CD4-positive, alpha-beta memory T cell (primary cell): ENCODE measurements at regions of chr4 and their contacts with region 1.

Region 1: GRCh38 chr4:145936142-145936996 is 2.3 kb downstream of the ZNF827 start:
- DNase-seq: peak; percentile 62 to 83 (median 66)
- H3K4me3 ChIP-seq: peak overlapping the region; percentile 69 to 73
- H3K4me3 Mint-ChIP-seq: peak overlapping the region; percentile 91 to 99 (median 95)
- H3K27ac ChIP-seq: peak overlapping the region; percentile 39
- H3K27ac Mint-ChIP-seq: peak overlapping the region; percentile 86 to 95 (median 91)
- H3K4me1 ChIP-seq: peaks cover 15% of the 10 kb centered on the region
- H3K4me1 Mint-ChIP-seq: peaks cover 19 to 44% (median 27%) of the 10 kb centered on the region in 4 donors
- H3K27me3 ChIP-seq: no peaks in the 10 kb centered on the region
- H3K27me3 Mint-ChIP-seq: peaks cover 3 to 5% of the 10 kb centered on the region in 2 donors

Region 2: DNA sequence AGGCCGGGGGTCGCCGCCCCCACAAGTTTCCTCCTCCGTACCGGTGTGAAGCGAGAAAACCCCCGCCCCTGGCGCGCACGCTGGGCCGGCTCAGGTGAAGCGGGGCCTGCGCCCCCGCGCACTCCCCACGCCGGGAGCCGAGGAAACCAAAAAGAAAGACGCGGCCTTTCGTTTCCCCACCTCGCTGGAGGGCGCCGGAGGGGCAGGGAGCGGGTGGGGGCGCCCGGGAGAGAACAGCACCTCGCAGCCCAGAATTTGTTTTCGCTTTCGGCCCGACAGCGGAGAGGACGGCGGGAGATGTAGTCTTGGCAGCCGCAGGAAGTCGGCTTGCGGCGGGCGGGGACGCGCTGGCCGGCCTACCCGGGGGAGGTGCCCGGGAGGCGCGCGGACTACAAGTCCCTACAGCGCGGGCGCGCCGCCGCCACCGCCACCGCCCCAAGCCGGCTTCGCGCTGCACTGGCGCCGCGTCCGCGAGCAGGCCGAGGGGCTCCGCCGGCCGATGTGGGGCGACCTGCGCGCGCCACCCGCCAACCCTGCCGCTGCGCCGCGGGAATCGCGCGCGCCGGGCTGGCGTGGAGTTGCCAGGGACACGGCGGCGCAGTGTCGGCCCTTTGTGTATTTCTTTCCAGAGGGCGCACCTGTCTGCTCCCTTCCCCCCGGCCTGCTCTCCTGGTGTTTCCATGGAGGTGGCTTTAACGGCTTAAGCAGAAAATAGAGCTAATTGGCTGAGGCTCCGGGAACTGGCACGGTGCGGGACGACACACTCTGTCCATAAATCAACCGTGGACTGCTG is 755.9 kb before region 1 on chr4 and contains the start of gene OTUD4:
- CTCF ChIA-PET with region 1: no interaction called
- POLR2A ChIA-PET with region 1: no interaction called
- intact Hi-C with region 1: loop called (anchors 5 kb)
- DNase-seq: peak; percentile 95 to 97 (median 96)
- H3K4me3 ChIP-seq: peak within 1 kb of the TSS; percentile 84 to 96
- H3K4me3 Mint-ChIP-seq: peak within 1 kb of the TSS; percentile 89 to 98 (median 95)
- H3K27ac ChIP-seq: peak within 1 kb of the TSS; percentile 94
- H3K27ac Mint-ChIP-seq: peak within 1 kb of the TSS; percentile 96 to 99 (median 98)
- H3K4me1 ChIP-seq: peaks cover 40% of the 10 kb centered on the region
- H3K4me1 Mint-ChIP-seq: peaks cover 15 to 40% (median 28%) of the 10 kb centered on the region in 4 donors
- H3K27me3 ChIP-seq: no peaks in the 10 kb centered on the region
- H3K27me3 Mint-ChIP-seq: no peaks in the 10 kb centered on the region
- total RNA-seq, gene OTUD4: 60.1 to 61.3 TPM

Region 3: GRCh38 chr4:145830699-145831098 is 105.7 kb before region 1 on chr4:
- CTCF ChIA-PET with region 1: no interaction called
- POLR2A ChIA-PET with region 1: no interaction called
- intact Hi-C with region 1: loop called (anchors 5 kb)
- DNase-seq: no peak
- H3K4me3 ChIP-seq: no peak overlapping the region
- H3K4me3 Mint-ChIP-seq: peak overlapping the region in 1 of 8 donors; percentile 15
- H3K27ac ChIP-seq: no peak overlapping the region
- H3K27ac Mint-ChIP-seq: peak overlapping the region in 2 of 7 donors; percentile 29 to 80
- H3K4me1 ChIP-seq: peaks cover 21% of the 10 kb centered on the region
- H3K4me1 Mint-ChIP-seq: peaks cover 18 to 45% (median 32%) of the 10 kb centered on the region in 4 donors
- H3K27me3 ChIP-seq: no peaks in the 10 kb centered on the region
- H3K27me3 Mint-ChIP-seq: no peaks in the 10 kb centered on the region

Region 4: DNA sequence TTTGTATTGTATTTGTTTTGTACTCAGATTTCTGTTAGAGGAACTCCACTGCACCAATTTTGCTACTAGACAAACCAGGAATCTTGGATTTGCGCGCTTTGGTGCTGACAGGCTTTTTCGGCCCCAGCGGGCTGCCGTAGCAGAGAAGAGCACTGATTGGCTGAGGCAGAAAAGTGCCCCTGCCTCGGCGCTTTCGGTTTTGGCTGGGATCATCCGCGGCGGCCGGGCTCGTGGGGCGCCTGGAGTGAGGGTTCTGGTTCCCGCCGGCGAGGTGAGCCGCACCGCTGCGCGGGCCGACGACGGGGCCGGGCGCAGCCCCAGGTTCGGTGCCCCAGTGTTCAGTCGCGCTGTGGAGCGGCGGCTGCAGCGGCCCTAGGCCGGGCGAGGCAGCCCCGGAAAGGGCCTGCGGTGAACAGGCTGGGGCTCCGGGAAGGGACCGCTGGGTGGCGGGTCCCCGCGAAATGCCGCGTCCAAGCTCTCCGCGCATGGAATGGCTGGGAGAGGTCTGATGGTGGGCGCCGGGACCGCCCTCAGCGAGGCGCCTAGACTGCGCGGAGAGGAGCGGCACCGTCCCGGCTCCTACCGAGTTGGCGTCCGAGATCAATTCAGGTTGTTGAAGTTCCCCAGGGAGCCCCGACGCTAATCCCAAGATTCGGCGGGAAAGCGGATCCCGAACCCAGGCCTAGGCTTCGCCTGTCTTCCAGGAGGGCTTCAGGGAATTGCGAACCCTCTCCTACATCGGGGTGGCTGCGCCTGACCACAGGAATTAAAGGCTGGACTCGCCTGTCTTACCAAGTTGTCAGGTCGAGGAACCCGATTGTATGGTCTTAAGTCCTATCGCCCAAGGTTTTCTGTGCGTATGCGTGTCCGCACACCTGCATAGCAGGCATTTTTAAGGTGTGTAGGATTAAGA is 239.4 kb after region 1 on chr4 and contains the start of gene LSM6:
- CTCF ChIA-PET with region 1: no interaction called
- POLR2A ChIA-PET with region 1: no interaction called
- intact Hi-C with region 1: loop called (anchors 2 kb)
- DNase-seq: peak; percentile 83 to 87 (median 84)
- H3K4me3 ChIP-seq: peak within 1 kb of the TSS; percentile 39 to 96
- H3K4me3 Mint-ChIP-seq: peak within 1 kb of the TSS; percentile 86 to 96 (median 92)
- H3K27ac ChIP-seq: peak within 1 kb of the TSS; percentile 81
- H3K27ac Mint-ChIP-seq: peak within 1 kb of the TSS; percentile 93 to 98 (median 97)
- H3K4me1 ChIP-seq: peaks cover 53% of the 10 kb centered on the region
- H3K4me1 Mint-ChIP-seq: peaks cover 34 to 63% (median 42%) of the 10 kb centered on the region in 4 donors
- H3K27me3 ChIP-seq: no peaks in the 10 kb centered on the region
- H3K27me3 Mint-ChIP-seq: no peaks in the 10 kb centered on the region
- total RNA-seq, gene LSM6: 47.7 to 54.0 TPM

Region 5: GRCh38 chr4:146310319-146311021 is 374.1 kb after region 1 on chr4:
- CTCF ChIA-PET with region 1: no interaction called
- POLR2A ChIA-PET with region 1: no interaction called
- intact Hi-C with region 1: no loop called
- DNase-seq: no peak
- H3K4me3 ChIP-seq: no peak overlapping the region
- H3K4me3 Mint-ChIP-seq: no peak overlapping the region
- H3K27ac ChIP-seq: no peak overlapping the region
- H3K27ac Mint-ChIP-seq: no peak overlapping the region
- H3K4me1 ChIP-seq: no peaks in the 10 kb centered on the region
- H3K4me1 Mint-ChIP-seq: no peaks in the 10 kb centered on the region
- H3K27me3 ChIP-seq: no peaks in the 10 kb centered on the region
- H3K27me3 Mint-ChIP-seq: no peaks in the 10 kb centered on the region

Region 6: DNA sequence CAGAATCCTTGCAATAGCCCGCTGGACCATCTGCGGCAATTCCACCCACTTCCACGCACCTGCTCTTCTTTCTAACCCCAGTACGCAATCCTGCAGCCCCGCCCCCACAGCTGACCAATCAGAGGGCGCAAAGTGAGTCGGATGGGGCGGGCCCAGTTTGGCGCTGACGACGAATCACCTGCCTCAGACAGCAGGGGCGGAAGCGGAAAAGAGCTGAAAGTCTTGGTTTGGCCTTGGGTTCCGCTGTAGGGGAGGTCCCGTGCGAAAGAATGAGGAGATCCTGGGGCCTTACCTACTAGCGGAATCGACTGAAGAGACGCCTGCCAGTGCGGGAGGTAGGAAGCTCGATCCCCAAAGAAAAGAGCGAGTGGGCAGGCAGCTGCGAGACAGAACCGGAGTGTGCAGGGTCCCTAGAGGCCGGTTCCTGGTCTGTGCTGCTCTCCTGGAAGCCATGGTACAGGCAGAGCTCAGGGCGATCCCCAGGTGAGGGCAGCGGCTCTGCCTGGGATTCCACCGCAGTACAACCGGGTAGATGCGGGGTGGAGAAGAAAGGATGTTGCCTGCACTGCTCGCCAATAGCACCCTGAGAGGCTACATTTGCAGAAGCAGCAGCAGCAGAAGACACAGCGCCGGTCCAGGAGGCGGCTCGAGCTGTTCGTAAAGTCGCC is 1680.9 kb after region 1 on chr4 and contains the start of gene TMEM184C:
- CTCF ChIA-PET with region 1: no interaction called
- POLR2A ChIA-PET with region 1: no interaction called
- intact Hi-C with region 1: loop called (anchors 2 kb)
- DNase-seq: peak; percentile 97 to 98 (median 98)
- H3K4me3 ChIP-seq: peak within 1 kb of the TSS; percentile 82 to 99
- H3K4me3 Mint-ChIP-seq: peak within 1 kb of the TSS; percentile 92 to 98 (median 96)
- H3K27ac ChIP-seq: peak within 1 kb of the TSS; percentile 93
- H3K27ac Mint-ChIP-seq: peak within 1 kb of the TSS; percentile 96 to 99 (median 97)
- H3K4me1 ChIP-seq: peaks cover 49% of the 10 kb centered on the region
- H3K4me1 Mint-ChIP-seq: peaks cover 22 to 51% (median 36%) of the 10 kb centered on the region in 4 donors
- H3K27me3 ChIP-seq: no peaks in the 10 kb centered on the region
- H3K27me3 Mint-ChIP-seq: peaks cover 0 to 1% of the 10 kb centered on the region in 2 donors
- total RNA-seq, gene TMEM184C: 28.8 to 31.5 TPM